Right ventricle myocardium inferior (tissue), 1 donor: ENCODE measurements at regions of chr3 and their contacts with region 1.

Region 1: GRCh38 chr3:53114011-53114400 is 16.2 kb downstream of the RFT1 start:
- DNase-seq: peak; percentile 78
- ATAC-seq: peak; percentile 79

Region 2: DNA sequence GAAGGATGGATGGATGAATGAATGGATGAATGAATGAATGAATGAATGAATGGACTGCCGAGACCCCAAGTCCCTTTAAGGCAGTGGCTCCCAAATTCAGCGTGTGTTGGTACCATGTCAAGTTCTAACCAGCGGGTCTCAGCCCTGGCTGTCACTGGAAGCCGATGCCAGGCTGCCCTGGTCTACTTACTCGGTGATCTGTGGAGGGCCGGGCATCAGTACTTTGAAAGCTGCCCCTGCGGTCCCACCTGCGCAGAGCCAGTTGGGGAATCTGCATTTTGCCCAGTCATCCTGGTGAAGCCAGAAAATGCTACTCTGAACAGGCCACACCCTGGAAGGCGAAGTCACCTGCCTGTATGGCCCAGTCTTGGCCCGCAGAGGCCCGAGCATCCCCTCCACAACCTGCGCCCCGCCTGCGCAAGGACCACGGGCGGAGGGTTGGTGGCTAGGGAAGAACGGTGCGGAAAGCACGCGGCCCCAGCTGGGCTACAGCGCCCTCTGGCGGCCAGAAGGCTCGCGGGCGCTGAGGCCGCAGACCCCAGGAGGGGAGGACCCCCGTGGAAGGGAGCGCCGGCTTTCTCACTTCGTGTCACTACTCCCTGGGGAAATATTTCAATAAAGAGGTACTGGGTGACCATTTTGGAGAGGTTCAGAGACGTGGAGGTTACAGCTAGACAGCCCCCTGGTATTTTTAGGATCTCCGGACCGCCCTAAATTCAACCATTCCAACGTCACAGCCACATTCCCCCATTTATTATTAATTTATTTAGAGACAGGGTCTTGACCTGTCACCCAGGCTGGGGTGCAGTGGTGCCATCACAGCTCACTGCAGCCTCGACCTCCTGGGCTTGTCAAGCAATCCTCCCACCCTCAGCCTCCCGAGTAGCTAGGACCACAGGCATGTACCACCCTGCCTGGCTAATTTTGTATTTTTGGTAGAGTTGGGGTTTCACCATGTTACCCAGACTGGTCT is 81.9 kb after region 1 on chr3:
- intact Hi-C with region 1: loop called (anchors 1 kb)
- DNase-seq: peak; percentile 82
- ATAC-seq: peak; percentile 72

Region 3: GRCh38 chr3:53384465-53385423 is 270.7 kb after region 1 on chr3:
- intact Hi-C with region 1: no loop called
- DNase-seq: no peak
- ATAC-seq: no peak

Region 4: GRCh38 chr3:53845103-53845880 is 731.3 kb after region 1 on chr3:
- intact Hi-C with region 1: no loop called
- DNase-seq: peak; percentile 78
- ATAC-seq: peak; percentile 58